Tibial artery (tissue), 4 donors: ENCODE measurements at regions of chr3 and their contacts with region 1.

Region 1: DNA sequence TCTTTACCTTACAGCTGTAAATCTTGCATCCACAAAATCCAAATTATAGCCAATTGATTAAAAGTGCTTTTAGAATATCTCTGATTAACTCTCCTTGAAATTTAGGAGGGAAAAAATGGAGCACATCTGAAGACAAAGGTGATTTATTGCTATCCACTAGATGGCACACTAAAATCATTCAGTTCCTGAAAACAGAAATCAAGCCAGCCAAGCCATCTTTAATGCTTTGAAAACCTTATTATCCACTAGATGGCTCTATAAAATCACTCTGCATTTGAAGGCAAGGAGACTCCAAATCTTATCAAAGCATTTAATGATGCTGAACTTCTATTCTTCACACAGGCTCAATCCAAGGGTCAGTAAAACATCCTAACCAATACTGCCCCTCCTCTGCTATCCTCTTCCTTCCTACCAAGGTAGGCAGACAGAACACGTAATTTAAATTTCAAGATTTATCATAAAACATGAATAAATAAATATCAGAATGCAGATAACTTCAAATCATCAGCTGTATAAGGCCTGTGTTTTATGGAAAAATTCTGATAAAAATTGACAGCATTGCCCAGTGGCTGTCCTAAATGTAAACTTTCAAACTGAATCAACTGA is 48.4 kb downstream of the GOLIM4 start:
- DNase-seq: no peak
- H3K4me3 ChIP-seq: no peak overlapping the region
- H3K27ac ChIP-seq: no peak overlapping the region
- H3K4me1 ChIP-seq: peaks cover 0 to 32% (median 19%) of the 10 kb centered on the region in 4 donors
- H3K27me3 ChIP-seq: no peaks in the 10 kb centered on the region
- CTCF ChIP-seq: peak; percentile 78 to 92

Region 2: DNA sequence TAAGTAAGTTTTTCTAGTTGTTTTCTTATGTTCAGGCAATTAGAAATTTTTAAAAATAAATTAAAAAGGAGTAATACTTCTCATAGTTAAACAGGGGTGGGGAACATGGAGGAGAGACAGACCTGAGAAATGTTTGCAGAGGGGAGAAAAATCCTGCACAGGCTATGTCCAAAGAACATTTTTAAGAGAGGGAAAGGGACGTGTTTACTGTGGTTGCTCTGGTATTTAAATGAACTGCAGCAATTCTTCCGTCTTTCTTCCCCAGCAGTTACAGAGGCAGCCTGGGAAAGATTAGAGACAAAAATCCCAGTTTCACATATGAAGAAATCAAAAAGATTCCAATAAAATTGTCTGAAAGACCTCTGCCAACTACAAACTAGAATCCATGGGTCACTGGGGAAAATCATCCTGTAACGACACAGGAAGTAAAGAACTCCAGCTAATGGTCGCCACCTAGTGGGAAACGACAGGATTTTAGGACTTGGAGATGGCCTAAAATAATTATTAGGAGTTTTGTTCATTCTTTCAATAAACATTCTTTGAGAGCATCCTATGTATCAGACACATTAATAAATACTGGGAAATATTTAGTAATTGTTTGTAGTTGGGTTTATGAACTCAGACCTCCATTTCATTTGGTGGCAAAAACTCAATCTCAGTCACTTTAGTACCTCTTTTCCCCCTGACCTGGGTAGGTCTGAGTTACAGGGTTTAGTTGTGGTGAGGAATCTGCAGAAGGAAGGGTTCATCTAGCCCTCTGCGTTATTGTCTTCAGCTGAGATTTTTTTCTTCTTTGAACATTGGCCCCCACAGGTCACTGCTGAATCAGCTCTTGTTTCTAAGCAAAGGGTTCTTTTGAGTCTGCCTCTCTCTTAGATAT is 118.3 kb after region 1 on chr3:
- intact Hi-C with region 1: loop called (anchors 5 kb)
- DNase-seq: peak in 1 of 2 donors; percentile 60
- H3K4me3 ChIP-seq: no peak overlapping the region
- H3K27ac ChIP-seq: no peak overlapping the region
- H3K4me1 ChIP-seq: no peaks in the 10 kb centered on the region
- H3K27me3 ChIP-seq: no peaks in the 10 kb centered on the region
- CTCF ChIP-seq: peak; percentile 78 to 81